Natural killer cell (primary cell): ENCODE measurements at regions of chr4 and their contacts with region 1.

Region 1: GRCh38 chr4:48340965-48341775 is at the start of gene SLAIN2:
- DNase-seq: peak; percentile 98 to 100
- ATAC-seq: peak; percentile 82 to 93 (median 87)
- H3K4me3 ChIP-seq: peak within 1 kb of the TSS; percentile 98
- H3K4me3 Mint-ChIP-seq: peak within 1 kb of the TSS; percentile 95
- H3K27ac ChIP-seq: peak within 1 kb of the TSS; percentile 98
- H3K27ac Mint-ChIP-seq: peak within 1 kb of the TSS; percentile 93 to 98
- H3K4me1 ChIP-seq: peaks cover 12% of the 10 kb centered on the region
- H3K4me1 Mint-ChIP-seq: peaks cover 45 to 51% of the 10 kb centered on the region in 2 donors
- H3K27me3 ChIP-seq: no peaks in the 10 kb centered on the region
- H3K27me3 Mint-ChIP-seq: no peaks in the 10 kb centered on the region
- CTCF ChIP-seq: peak; percentile 43
- total RNA-seq, gene SLAIN2: 76.9 to 103 (median 98.5) TPM

Region 2: DNA sequence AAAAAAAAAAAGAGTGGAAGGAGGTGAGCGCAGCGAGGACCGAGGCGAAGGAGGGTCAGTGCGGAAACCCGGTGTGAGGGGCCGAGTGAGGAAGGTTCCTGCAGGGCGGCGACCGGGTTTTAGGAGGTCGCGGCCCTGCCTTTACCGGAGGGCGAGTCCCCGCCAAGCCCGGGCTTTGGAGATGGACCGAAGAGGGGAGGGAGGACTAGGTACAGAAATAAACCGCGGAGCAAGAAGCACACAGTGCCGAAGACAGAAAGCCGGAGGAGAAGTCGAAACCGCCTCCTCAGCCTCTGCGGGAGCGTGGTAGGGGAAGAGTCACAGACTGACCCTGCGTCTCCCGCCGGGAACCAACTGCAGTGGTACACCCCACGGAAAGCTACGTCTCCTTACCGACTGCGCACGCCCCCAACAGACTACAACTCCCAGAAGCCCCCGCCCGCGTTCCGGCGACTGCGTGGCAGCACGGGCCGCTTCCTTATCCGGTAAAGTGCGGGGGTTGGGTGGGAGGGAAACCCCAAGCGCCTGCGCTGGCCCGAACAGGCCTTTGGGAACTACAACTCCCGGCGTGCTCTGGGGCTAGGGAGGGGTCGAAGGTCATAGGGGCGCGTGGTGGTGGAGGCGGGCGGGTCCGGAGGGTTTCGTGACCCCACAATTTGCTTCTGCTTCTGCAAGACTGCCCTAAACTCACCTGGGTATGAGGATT is 426.8 kb before region 1 on chr4 and contains the start of gene NFXL1:
- intact Hi-C with region 1: loop called (anchors 2 kb)
- DNase-seq: peak; percentile 88 to 97
- ATAC-seq: peak; percentile 96 to 99 (median 97)
- H3K4me3 ChIP-seq: peak within 1 kb of the TSS; percentile 85
- H3K4me3 Mint-ChIP-seq: peak within 1 kb of the TSS; percentile 97
- H3K27ac ChIP-seq: peak within 1 kb of the TSS; percentile 65
- H3K27ac Mint-ChIP-seq: peak within 1 kb of the TSS; percentile 74 to 88
- H3K4me1 ChIP-seq: peaks cover 7% of the 10 kb centered on the region
- H3K4me1 Mint-ChIP-seq: peaks cover 23 to 26% of the 10 kb centered on the region in 2 donors
- H3K27me3 ChIP-seq: no peaks in the 10 kb centered on the region
- H3K27me3 Mint-ChIP-seq: peaks cover 0 to 3% of the 10 kb centered on the region in 2 donors
- CTCF ChIP-seq: no peak
- total RNA-seq, gene NFXL1: 6.5 to 11.4 (median 9.9) TPM

Region 3: DNA sequence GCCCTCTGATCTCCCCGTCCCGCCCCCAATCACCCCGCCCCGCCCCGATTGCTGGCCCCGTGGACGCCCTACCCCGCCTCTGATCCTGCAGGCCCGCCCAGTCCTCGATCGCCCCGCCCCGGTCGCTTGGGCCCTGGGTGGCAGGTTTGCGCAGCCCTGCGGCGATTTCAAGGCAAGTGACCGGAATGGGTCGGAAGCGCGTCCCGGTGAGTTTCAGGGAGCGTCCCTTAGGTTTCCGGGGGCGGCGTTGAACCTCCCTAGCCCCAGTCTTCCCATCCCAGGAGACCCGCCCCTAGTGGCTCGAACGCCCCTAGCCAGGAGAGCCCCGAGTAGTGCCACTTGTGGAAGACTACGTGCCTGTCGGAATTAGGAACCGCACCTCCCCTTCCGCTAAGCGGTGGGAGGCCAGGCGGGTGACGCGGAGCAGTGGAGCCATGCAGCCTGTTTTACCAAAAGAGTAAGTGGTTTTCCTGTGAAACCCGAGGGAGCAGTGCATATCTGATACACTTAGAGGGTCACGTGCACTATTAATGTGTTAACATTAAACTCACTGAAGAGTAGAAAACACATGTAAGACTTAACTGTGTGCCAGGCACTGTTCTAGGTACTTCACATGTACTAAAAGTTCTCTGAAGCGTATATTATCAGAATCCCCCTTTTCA is 71.2 kb before region 1 on chr4:
- intact Hi-C with region 1: loop called (anchors 1 kb)
- DNase-seq: peak; percentile 83 to 87
- ATAC-seq: peak; percentile 86 to 96 (median 90)
- H3K4me3 ChIP-seq: peak overlapping the region; percentile 61
- H3K4me3 Mint-ChIP-seq: peak overlapping the region; percentile 97
- H3K27ac ChIP-seq: peak overlapping the region; percentile 94
- H3K27ac Mint-ChIP-seq: peak overlapping the region; percentile 84 to 91
- H3K4me1 ChIP-seq: peaks cover 14% of the 10 kb centered on the region
- H3K4me1 Mint-ChIP-seq: peaks cover 17 to 20% of the 10 kb centered on the region in 2 donors
- H3K27me3 ChIP-seq: no peaks in the 10 kb centered on the region
- H3K27me3 Mint-ChIP-seq: no peaks in the 10 kb centered on the region
- CTCF ChIP-seq: no peak

Region 4: GRCh38 chr4:48360285-48361010 is 19.3 kb after region 1 on chr4:
- intact Hi-C with region 1: no loop called
- DNase-seq: no peak
- ATAC-seq: no peak
- H3K4me3 ChIP-seq: no peak overlapping the region
- H3K4me3 Mint-ChIP-seq: no peak overlapping the region
- H3K27ac ChIP-seq: no peak overlapping the region
- H3K27ac Mint-ChIP-seq: peak overlapping the region in 1 of 2 donors; percentile 5
- H3K4me1 ChIP-seq: no peaks in the 10 kb centered on the region
- H3K4me1 Mint-ChIP-seq: peaks cover 20 to 26% of the 10 kb centered on the region in 2 donors
- H3K27me3 ChIP-seq: no peaks in the 10 kb centered on the region
- H3K27me3 Mint-ChIP-seq: no peaks in the 10 kb centered on the region
- CTCF ChIP-seq: no peak